ENCODE measurements at regions of chr19 and their contacts with region 1.

Region 1: DNA sequence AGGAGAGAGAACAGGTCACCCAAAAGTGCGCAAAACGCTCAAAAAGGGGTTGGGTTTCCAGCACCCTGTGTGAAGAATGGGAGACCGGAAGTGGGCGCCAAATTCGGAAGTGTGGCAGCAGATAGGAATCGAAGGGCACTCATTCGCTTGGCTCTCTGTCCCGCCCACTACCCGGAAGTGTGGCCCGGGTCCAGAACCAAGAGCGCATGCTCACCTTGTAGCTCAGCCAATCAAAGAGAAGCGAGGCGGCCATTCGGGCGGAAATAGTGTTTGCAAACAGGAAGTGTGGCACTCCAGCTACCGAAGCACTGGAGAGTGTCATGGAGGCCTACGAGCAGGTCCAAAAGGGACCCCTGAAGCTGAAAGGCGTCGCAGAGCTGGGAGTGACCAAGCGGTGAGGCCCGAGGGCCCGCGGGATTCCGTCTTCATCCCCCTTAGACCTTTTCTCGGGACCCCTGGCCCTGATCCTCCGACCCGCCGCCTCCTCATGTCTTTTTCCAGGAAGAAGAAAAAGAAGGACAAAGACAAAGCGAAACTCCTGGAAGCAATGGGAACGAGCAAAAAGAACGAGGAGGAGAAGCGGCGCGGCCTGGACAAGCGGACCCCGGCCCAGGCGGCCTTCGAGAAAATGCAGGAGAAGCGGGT is at the start of gene FAM32A:
- DNase-seq: peak; percentile 100
- ATAC-seq: peak; percentile 95
- H3K4me3 Mint-ChIP-seq: peak within 1 kb of the TSS; percentile 98
- H3K27ac Mint-ChIP-seq: peak within 1 kb of the TSS; percentile 97
- H3K4me1 Mint-ChIP-seq: peaks cover 39% of the 10 kb centered on the region
- H3K27me3 Mint-ChIP-seq: peaks cover 6% of the 10 kb centered on the region
- total RNA-seq, gene FAM32A: 65.8 to 69.4 TPM

Region 2: GRCh38 chr19:16062789-16063188 is 122.5 kb before region 1 on chr19:
- CTCF ChIA-PET with region 1: interaction called, 13 read pairs
- POLR2A ChIA-PET with region 1: no interaction called
- DNase-seq: peak; percentile 75
- ATAC-seq: peak; percentile 45
- H3K4me3 Mint-ChIP-seq: no peak overlapping the region
- H3K27ac Mint-ChIP-seq: no peak overlapping the region
- H3K4me1 Mint-ChIP-seq: peaks cover 34% of the 10 kb centered on the region
- H3K27me3 Mint-ChIP-seq: peaks cover 12% of the 10 kb centered on the region

Region 3: GRCh38 chr19:16088351-16089009 is 96.8 kb before region 1 on chr19:
- CTCF ChIA-PET with region 1: interaction called, 10 read pairs
- POLR2A ChIA-PET with region 1: no interaction called
- DNase-seq: no peak
- ATAC-seq: no peak
- H3K4me3 Mint-ChIP-seq: no peak overlapping the region
- H3K27ac Mint-ChIP-seq: peak overlapping the region; percentile 37
- H3K4me1 Mint-ChIP-seq: peaks cover 66% of the 10 kb centered on the region
- H3K27me3 Mint-ChIP-seq: no peaks in the 10 kb centered on the region

Region 4: DNA sequence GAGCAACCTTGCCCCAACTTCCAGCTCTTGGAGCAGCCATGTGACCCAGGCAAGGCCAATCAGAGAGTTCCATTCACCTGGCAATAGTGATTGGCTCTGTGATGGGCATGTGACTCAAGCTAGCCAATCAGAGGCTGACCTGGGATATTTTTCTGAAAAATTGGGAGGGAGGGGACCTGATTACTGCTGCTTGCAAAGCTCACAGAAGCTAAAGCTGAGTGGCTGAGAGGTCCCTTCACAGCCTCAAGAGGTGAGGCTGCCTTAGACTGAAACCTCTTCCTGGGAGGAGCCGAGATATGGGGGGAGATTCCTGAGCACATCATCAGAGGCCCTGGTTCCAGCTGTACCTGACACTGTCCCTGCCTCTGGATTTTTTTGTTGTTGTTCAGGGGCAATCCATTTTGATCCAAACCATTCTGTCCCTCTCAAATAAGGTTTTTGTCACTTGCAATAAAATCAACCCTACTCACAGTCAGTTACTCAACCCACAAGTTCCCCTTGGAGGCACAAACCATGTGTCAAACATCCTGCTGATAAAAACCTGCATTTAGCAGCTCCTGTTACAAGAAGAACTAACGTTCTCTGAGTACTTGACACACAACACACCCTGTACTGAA is 16.7 kb before region 1 on chr19:
- CTCF ChIA-PET with region 1: interaction called, 13 read pairs
- POLR2A ChIA-PET with region 1: interaction called, 3 read pairs
- DNase-seq: no peak
- ATAC-seq: peak; percentile 49
- H3K4me3 Mint-ChIP-seq: no peak overlapping the region
- H3K27ac Mint-ChIP-seq: peak overlapping the region; percentile 72
- H3K4me1 Mint-ChIP-seq: peaks cover 17% of the 10 kb centered on the region
- H3K27me3 Mint-ChIP-seq: no peaks in the 10 kb centered on the region

Region 5: GRCh38 chr19:16417660-16418596 is 232.7 kb after region 1 on chr19:
- CTCF ChIA-PET with region 1: interaction called, 19 read pairs
- POLR2A ChIA-PET with region 1: no interaction called
- DNase-seq: peak; percentile 72
- ATAC-seq: peak; percentile 94
- H3K4me3 Mint-ChIP-seq: no peak overlapping the region
- H3K27ac Mint-ChIP-seq: no peak overlapping the region
- H3K4me1 Mint-ChIP-seq: peaks cover 11% of the 10 kb centered on the region
- H3K27me3 Mint-ChIP-seq: no peaks in the 10 kb centered on the region